ENCODE measurements at regions of chr4 and their contacts with region 1.

Region 1: DNA sequence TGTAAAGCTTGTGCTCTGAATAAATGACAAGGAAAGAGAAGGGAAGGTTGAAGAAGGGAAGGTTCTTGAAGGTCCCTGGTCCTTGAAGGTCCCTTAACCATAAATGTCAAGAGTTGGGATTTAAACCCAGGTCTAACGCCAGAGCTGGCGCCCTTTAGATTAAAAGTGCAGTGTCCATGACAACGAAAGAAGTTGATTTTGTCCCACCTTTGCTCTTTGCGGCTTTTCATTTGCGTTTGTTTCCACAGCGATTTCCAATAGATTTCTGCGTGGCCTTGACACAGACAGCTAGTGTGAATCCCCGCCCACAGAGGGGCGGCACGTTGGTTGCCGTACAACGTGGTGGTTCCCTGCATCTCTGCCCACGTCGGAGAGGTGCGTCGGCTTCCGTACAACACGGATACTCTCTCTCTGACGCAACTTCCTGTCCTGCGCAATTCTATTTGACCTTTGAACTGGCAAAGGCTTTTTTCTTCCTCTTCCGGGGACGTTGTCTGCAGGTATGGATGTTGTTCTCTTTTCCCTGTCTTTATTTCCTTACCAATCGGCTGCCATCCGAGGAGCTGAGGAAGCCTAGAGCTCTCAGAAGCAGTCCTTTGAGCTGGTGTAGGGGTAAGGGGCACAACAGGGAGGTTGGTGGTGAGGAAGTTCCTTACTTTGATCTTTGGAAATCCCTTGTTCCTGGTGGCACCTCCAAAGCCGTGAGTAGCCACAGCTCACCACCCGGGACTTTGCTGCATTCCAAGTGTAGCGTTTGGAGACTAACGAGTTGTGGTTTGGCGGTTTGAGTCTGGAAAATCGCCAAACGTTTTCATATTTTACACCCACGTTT is at the start of gene RPL34:
- DNase-seq: peak; percentile 99
- ATAC-seq: peak; percentile 100
- total RNA-seq, gene RPL34: 747 TPM

Region 2: GRCh38 chr4:108650212-108651013 is 30.1 kb after region 1 on chr4 and contains the start of gene OSTC:
- intact Hi-C with region 1: loop called (anchors 1 kb)
- DNase-seq: peak; percentile 98
- ATAC-seq: peak; percentile 98
- total RNA-seq, gene OSTC: 30.5 TPM

Region 3: DNA sequence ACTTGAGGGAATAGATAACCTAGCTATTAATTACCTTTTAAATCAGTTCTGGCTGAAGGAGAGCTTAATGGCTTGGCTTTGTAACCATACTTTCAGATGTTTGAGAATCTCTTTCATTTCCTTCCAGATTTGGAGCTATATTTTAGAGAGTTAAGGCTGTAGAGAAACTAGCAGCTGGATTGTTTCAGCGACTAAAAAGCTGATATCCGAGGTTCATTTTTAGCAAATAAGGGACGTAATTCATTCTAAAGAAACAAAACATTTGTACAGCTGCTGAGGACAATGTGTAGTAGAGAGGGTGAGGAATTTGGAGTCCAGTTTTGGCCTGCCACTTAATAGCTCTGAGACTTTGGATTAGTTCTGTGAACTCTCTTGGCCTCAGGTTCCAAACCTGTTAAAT is 42.3 kb after region 1 on chr4:
- intact Hi-C with region 1: no loop called
- DNase-seq: no peak
- ATAC-seq: no peak

Region 4: DNA sequence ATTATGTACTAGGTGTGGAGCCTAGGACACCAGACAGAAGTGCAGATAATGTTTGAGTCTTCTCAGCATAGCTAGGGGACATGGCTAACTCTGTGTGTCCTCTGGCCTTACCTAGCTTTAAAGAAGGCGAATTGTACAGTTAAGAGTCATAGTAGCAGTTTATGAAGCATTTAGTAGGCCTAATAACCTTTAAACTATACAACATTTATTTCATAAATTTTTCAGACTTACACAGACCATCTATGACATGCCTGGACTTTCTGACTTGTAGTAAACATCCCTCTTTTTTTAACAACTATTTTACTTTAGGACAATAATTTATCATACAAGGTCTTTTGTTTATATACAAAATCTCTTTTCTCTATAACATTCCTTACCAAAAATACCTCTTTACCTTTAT is 105.1 kb after region 1 on chr4:
- intact Hi-C with region 1: no loop called
- DNase-seq: no peak
- ATAC-seq: no peak

Region 5: DNA sequence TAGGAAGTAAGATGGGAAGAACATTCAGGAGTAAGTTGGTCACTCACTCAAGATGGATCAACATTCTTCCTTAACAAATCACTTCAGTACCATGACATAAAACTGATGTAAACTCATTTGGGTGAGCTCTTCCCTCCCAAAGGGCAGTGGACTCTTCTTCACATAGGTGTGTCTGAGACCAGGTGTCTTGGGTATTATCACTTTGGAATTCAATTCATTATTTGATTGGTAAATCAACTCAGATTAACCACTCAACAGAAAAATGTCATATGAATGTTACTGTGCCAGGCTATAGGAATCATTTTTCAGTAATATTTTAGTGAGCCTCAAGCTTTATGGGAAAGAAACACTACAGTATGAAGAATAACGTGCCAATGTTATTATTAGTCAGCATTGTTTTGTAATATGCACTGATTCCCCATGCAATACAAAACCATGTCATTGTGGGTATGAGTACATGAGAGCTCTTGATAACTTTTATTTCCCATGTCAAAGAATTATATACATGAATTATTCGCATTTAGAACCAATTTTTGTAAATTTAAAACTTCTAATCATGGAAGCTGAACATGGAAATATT is 201.1 kb after region 1 on chr4:
- intact Hi-C with region 1: no loop called
- DNase-seq: no peak
- ATAC-seq: no peak